PC-9 (cell line): ENCODE measurements at regions of chr2 and their contacts with region 1.

Region 1: DNA sequence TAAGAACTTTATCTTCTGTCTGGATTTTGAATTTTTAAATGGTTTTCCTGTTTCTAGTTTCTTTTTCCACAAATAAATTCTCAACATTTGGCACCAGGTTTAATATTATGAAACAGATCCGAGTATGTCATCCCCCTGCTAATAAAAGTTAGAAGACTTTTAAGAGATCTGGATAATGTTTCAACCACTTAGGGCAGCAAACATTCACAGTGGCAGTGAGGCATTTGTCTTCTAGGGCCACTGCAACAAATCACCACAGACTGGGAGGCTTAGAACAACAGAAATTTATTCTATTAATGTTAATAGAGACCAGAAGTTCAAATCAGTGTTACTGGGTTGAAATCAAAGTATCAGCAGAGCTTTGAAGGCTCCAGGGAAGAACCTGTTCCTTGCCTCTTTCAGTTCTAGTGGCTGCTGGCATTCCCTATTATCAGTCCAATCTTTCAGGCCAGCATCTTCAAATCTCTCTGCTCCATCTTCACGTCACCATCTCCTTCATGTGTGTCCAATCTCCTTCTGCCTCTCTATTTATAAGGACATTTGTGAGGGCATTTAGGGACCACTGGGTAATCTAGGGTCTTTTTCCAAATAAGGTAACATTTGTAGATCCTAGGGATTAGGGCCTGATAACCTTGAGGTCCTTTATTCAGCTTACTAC is 23.4 kb downstream of the ACSL3 start:
- DNase-seq: no peak
- H3K4me3 ChIP-seq: no peak overlapping the region
- H3K27ac ChIP-seq: peak overlapping the region; percentile 1; the same call in 1 of the 2 replicates
- H3K4me1 ChIP-seq: peaks cover 68% of the 10 kb centered on the region
- H3K27me3 ChIP-seq: no peaks in the 10 kb centered on the region
- CTCF ChIP-seq: no peak

Region 2: GRCh38 chr2:222358876-222359275 is 525.4 kb before region 1 on chr2:
- CTCF ChIA-PET with region 1: interaction called, 10 read pairs
- POLR2A ChIA-PET with region 1: no interaction called
- intact Hi-C with region 1: no loop called
- DNase-seq: peak in 1 of 2 experiments; percentile 33
- H3K4me3 ChIP-seq: no peak overlapping the region
- H3K27ac ChIP-seq: no peak overlapping the region
- H3K4me1 ChIP-seq: 0 out of 2 replicates have a peak, but pooled peaks cover under 1% of the 10 kb centered on the region
- H3K27me3 ChIP-seq: no peaks in the 10 kb centered on the region
- CTCF ChIP-seq: no peak

Region 3: DNA sequence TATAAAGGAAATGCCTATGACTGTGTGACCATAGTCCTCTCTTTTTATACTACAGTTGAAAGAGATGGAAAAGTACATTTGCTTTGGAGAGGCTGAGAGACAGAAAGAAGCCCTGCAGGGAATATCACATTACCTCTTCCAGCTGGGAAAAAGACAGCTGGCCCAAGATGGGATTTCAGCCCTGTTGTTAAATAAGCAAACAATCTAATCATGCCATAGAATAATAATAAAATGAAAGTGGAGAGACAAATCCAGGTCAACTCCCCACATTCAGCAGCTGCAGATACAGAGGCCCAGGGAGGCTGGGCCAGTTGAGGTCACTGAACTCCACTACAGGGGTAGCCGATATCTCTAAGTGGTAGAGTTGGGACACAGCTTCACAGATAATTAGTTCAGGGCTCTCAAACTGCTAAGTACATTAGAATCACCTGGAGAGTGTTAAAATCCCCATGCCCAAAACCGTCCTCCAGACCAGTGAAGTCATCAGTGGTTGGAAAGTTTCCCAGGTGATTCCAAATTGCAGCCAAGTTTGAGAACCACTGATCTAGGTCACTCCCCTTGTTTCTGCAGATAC is 130.9 kb before region 1 on chr2:
- CTCF ChIA-PET with region 1: no interaction called
- POLR2A ChIA-PET with region 1: interaction called, 3 read pairs
- intact Hi-C with region 1: loop called (anchors 1 kb)
- DNase-seq: no peak
- H3K4me3 ChIP-seq: no peak overlapping the region
- H3K27ac ChIP-seq: no peak overlapping the region
- H3K4me1 ChIP-seq: peaks cover 28% of the 10 kb centered on the region
- H3K27me3 ChIP-seq: no peaks in the 10 kb centered on the region
- CTCF ChIP-seq: no peak

Region 4: GRCh38 chr2:222774968-222775367 is 109.3 kb before region 1 on chr2:
- CTCF ChIA-PET with region 1: interaction called, 15 read pairs
- POLR2A ChIA-PET with region 1: no interaction called
- intact Hi-C with region 1: no loop called
- DNase-seq: peak; percentile 76 to 98
- H3K4me3 ChIP-seq: no peak overlapping the region
- H3K27ac ChIP-seq: peak overlapping the region; percentile 62
- H3K4me1 ChIP-seq: peaks cover 20% of the 10 kb centered on the region
- H3K27me3 ChIP-seq: no peaks in the 10 kb centered on the region
- CTCF ChIP-seq: no peak

Region 5: DNA sequence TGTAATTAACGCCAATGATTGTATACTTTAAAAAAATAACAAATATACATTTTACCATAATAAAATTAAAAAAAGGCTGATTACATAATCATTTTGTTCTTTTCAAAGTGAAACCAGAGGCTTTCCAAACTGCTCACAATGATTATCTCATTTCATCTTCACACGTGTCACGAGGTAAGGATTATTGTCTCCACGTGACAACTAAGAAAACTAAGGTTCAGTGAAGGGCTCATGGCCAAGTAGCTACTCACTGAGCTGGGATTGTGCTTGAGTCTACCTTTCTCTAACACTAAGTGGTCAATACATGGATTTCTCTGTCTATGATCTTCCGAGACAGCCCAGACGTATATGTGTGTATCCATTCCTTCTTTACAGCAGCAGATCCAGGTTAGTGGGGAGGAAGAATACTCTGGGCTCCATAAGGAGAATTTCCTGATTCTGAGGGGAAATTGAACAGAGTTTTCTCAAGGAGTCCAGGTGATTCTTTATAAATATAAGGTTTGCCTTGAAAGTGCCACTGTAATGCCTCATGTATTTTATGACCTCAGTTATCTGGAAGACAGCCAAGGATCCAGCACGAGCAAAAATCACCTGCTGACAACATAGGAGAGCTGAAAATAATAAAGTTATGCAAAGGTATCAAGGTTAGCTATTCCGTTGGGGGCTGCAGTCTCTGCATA is 49.0 kb before region 1 on chr2:
- CTCF ChIA-PET with region 1: no interaction called
- POLR2A ChIA-PET with region 1: no interaction called
- intact Hi-C with region 1: no loop called
- DNase-seq: peak in 1 of 2 experiments; percentile 74
- H3K4me3 ChIP-seq: no peak overlapping the region
- H3K27ac ChIP-seq: peak overlapping the region; percentile 23; the same call in 1 of the 2 replicates
- H3K4me1 ChIP-seq: peaks cover 60% of the 10 kb centered on the region
- H3K27me3 ChIP-seq: no peaks in the 10 kb centered on the region
- CTCF ChIP-seq: no peak

Region 6: DNA sequence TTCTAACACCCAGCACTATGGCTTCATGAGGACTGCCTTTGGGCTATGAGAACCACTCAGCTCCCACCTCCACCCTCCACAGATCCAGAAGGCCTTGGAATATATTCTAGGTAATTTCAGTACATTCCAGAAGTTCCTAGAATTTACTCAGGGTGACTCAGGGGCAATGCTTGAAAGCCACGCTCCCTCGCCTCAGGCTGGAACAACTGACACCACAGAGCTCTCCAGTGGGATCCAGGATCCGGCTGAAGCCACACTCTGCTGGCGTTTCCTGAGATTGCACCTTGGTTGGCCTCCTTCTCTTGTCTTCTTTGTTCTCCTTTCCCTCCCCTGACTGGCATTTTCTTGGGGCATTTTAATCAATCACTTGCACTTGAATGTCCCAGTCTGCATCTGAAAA is 75.1 kb after region 1 on chr2:
- CTCF ChIA-PET with region 1: no interaction called
- POLR2A ChIA-PET with region 1: interaction called, 18 read pairs
- intact Hi-C with region 1: no loop called
- DNase-seq: peak; percentile 96 to 98
- H3K4me3 ChIP-seq: no peak overlapping the region
- H3K27ac ChIP-seq: peak overlapping the region; percentile 55
- H3K4me1 ChIP-seq: peaks cover 18% of the 10 kb centered on the region
- H3K27me3 ChIP-seq: no peaks in the 10 kb centered on the region
- CTCF ChIP-seq: peak; percentile 79